PC-3 (cell line): ENCODE measurements at regions of chr20 and their contacts with region 1.

Region 1: DNA sequence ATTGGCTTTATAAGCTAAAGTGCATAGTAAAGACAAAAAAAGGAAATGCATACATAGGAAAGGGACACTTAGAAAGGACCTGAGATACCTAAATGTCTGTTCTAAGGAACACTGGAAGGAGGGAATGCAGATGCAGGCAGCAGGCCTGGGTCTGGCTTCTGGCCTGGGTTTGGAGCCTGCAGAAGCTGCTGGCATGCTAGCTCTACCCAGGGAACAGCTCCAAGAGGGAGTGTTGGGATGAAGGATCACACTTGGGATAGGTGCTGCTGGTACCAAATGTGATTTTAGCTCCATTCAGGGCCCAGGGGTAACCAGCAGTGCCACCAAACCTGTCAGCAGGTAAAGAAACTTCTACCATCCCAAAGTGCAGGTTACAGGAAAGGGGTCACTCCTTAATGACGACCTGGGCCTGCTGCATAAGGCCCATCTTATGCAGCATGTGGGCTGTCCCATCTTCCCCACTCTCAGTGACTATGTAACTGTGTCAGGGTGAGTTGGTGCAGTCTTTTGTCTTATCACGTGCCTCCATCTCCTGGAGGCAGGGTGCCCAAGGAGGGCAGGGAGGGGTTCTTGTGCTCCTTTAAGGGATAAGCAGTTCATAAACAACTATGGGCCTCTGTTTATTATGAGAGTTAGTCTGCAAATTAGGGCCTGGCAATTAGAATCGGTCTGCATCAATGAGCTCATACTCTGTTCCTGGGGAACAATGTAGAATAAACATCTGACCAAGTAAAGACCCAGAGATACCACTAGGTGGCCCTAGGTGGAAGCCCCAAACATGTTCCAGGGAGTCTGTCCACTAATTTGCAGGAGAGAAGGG is 26.9 kb downstream of the DDX27 start:
- DNase-seq: peak; percentile 70
- ATAC-seq: peak; percentile 89
- H3K4me3 ChIP-seq: no peak overlapping the region
- H3K27ac ChIP-seq: no peak overlapping the region
- H3K4me1 ChIP-seq: no peaks in the 10 kb centered on the region
- H3K27me3 ChIP-seq: no peaks in the 10 kb centered on the region
- CTCF ChIP-seq: peak; percentile 90

Region 2: DNA sequence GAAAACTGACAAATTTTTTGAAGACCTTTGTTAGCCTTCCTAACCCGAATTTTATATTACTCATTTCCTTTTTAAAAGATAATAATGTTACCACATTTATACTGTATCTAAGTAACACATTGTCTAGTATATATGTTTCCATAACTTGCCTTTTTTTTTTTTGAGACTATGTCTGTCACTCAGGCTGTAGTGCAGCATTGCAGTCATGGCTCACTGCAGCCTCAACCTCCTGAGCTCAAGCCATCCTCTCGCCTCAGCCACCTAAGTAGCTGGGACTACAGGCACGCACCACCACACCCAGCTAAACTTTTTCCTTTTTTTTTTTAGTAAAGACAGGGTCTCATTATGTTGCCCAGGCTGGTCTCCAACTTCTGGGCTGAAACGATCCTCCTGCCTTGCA is 13.2 kb after region 1 on chr20:
- CTCF ChIA-PET with region 1: interaction called, 17 read pairs
- POLR2A ChIA-PET with region 1: interaction called, 8 read pairs
- intact Hi-C with region 1: no loop called
- DNase-seq: no peak
- ATAC-seq: peak; percentile 38
- H3K4me3 ChIP-seq: no peak overlapping the region
- H3K27ac ChIP-seq: peak overlapping the region; percentile 62
- H3K4me1 ChIP-seq: peaks cover 19% of the 10 kb centered on the region
- H3K27me3 ChIP-seq: no peaks in the 10 kb centered on the region
- CTCF ChIP-seq: no peak

Region 3: DNA sequence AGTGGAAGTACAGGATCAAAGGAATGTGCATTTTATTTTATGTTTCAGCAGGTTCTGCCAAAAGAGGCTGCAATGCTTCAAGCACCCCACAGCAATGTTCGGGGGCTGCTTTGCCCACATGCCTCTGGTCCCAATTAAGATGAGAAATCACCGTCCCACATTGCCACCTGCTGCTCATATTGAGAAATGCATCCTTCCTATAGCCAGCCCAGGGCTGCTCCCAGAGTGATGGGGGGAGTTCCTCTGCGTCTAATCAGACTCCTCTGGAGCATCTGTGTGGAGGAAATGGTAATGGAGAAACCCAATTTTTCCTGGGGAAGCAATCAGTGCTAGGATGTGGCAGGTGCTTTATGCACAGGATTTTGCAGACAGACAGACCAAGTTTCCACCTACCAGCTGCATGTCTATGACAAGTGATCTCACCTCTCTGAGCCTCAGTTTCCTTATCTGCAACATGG is 288.2 kb after region 1 on chr20:
- CTCF ChIA-PET with region 1: no interaction called
- POLR2A ChIA-PET with region 1: no interaction called
- intact Hi-C with region 1: loop called (anchors 1 kb)
- DNase-seq: peak; percentile 88
- ATAC-seq: peak; percentile 85
- H3K4me3 ChIP-seq: no peak overlapping the region
- H3K27ac ChIP-seq: no peak overlapping the region
- H3K4me1 ChIP-seq: peaks cover 14% of the 10 kb centered on the region
- H3K27me3 ChIP-seq: peaks cover 15% of the 10 kb centered on the region
- CTCF ChIP-seq: peak; percentile 98

Region 4: DNA sequence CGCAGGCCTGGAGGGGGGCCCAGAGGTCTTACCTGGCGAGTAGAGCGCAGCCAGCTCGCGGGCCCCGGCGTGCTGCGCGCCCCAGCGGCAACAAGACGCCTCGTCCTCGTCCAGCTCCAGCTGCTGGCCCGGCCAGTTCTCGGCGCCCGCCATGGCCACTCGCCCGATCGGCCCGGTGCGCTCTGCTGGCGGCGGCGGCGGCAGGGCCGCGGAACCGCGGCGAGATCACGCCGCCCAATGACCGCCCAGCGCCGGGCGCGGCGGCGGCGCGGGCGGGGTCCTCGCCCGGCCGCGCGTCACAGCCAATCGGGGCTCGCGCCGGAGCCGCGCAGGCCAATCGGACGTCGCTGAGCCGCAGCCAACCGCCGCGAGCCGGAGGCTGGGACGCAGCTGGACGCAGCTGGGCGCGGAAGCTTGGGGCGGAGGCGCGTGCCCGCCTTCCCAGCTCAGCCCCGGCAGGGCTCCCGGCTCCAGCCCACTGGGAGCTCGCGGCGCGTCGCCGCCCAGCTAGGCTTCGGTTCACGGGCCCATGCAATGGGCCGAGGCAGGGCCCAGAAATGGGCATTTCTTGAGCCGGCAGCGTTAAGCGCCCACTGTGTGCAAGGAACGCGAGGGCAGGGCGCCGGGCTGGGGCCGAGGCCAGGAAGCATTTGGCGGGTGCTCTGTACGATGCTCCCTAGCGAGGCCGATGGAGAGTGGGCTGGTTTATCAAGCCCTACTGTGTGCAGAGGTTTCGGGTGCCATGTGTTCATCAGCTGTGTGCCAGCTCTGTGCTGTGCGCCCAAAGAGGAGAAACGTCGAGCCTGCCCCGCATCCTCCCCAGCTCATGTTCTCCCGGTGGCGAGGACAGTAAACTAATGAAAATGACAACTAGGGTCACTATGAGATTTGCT is 907.6 kb after region 1 on chr20 and contains the start of gene PEDS1:
- CTCF ChIA-PET with region 1: no interaction called
- POLR2A ChIA-PET with region 1: no interaction called
- intact Hi-C with region 1: no loop called
- DNase-seq: peak; percentile 98
- ATAC-seq: peak; percentile 93
- H3K4me3 ChIP-seq: peak within 1 kb of the TSS; percentile 76
- H3K27ac ChIP-seq: peak within 1 kb of the TSS; percentile 31
- H3K4me1 ChIP-seq: peaks cover 38% of the 10 kb centered on the region
- H3K27me3 ChIP-seq: no peaks in the 10 kb centered on the region
- CTCF ChIP-seq: no peak
- total RNA-seq, gene PEDS1: 53.8 and 59.1 TPM in 2 replicates